ENCODE measurements at regions of chr11 and their contacts with region 1.

Region 1: DNA sequence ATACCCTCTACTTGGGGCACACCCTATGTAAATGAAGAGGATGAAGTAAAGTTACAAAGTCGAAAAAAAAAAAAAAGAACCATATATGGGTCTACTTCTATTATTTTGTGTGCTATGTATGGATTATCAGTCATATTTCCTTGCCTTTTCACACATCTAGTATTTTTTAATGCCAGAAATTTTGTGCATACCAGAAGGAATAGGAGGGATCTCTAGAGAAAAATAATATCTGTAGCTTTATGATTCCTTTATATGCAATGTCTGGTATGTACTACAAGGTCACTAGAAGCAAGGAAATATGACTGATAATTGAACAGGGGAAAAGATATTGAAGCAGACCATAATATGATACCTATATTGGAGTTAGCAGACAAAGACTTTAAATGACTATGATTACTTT is 713.4 kb downstream of the OPCML start:
- DNase-seq: no peak
- ATAC-seq: no peak
- H3K4me3 ChIP-seq: no peak overlapping the region
- H3K4me3 Mint-ChIP-seq: no peak overlapping the region
- H3K27ac ChIP-seq: no peak overlapping the region
- H3K27ac Mint-ChIP-seq: no peak overlapping the region
- H3K4me1 ChIP-seq: no peaks in the 10 kb centered on the region
- H3K4me1 Mint-ChIP-seq: no peaks in the 10 kb centered on the region
- H3K27me3 ChIP-seq: no peaks in the 10 kb centered on the region
- H3K27me3 Mint-ChIP-seq: peaks cover 0 to 2% of the 10 kb centered on the region in 2 donors
- CTCF ChIP-seq: no peak

Region 2: GRCh38 chr11:132475026-132475425 is 343.9 kb before region 1 on chr11:
- intact Hi-C with region 1: no loop called
- DNase-seq: no peak
- ATAC-seq: no peak
- H3K4me3 ChIP-seq: no peak overlapping the region
- H3K4me3 Mint-ChIP-seq: no peak overlapping the region
- H3K27ac ChIP-seq: no peak overlapping the region
- H3K27ac Mint-ChIP-seq: no peak overlapping the region
- H3K4me1 ChIP-seq: no peaks in the 10 kb centered on the region
- H3K4me1 Mint-ChIP-seq: no peaks in the 10 kb centered on the region
- H3K27me3 ChIP-seq: no peaks in the 10 kb centered on the region
- H3K27me3 Mint-ChIP-seq: no peaks in the 10 kb centered on the region
- CTCF ChIP-seq: no peak

Region 3: DNA sequence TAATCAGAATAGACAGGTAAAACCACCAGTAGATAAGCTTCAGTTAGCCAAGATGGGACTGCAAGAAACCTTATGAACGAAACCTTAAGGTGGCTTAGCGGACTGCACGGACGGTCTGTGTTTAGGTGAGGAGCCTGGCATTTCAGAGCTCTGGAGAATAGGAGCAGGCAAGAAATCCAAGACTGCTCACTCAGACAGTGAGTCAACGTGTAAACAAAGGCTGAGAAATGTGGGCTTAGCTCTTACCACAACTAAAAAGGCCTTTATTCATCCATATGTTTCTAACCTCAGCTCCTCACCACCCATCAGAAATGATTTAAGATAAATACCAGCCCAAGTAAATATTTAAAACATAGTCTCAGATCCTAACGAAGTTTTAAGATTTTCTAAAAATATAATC is 55.7 kb after region 1 on chr11:
- intact Hi-C with region 1: loop called (anchors 10 kb)
- DNase-seq: no peak
- ATAC-seq: no peak
- H3K4me3 ChIP-seq: no peak overlapping the region
- H3K4me3 Mint-ChIP-seq: no peak overlapping the region
- H3K27ac ChIP-seq: no peak overlapping the region
- H3K27ac Mint-ChIP-seq: no peak overlapping the region
- H3K4me1 ChIP-seq: no peaks in the 10 kb centered on the region
- H3K4me1 Mint-ChIP-seq: no peaks in the 10 kb centered on the region
- H3K27me3 ChIP-seq: no peaks in the 10 kb centered on the region
- H3K27me3 Mint-ChIP-seq: peaks cover 0 to 2% of the 10 kb centered on the region in 2 donors
- CTCF ChIP-seq: no peak

Measured in natural killer cell (primary cell).